ENCODE measurements at regions of chr10 and their contacts with region 1.

Region 1: DNA sequence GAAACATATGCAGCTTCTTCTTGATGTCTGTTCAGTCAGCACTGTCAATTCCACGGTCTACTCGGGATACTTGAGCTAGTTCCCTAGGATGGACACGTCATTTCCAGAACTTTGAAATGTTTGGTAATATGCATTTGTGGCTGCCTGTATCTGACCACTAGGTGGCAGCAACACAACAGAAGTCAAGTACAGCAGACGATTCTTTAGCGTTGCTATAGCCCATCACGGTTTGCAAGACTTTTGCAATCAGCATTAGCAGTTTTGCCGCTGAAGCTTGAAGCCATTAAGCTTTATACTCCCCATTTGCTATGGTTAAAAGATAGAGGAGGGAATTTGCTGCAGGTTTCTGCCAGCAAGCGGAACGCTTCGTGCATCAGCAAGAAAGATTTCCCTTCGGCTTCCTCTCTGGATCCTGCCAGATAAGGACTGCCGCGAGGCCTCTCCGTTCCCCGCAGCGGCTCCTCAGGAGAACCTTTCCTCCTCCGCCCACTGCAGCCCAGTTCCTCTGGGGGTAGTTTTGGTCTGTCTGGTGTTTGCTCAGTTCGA is 63.5 kb downstream of the ABCC2 start:
- DNase-seq: peak in 1 of 2 experiments; percentile 74
- H3K4me3 ChIP-seq: no peak overlapping the region
- H3K27ac ChIP-seq: no peak overlapping the region
- H3K4me1 ChIP-seq: peaks cover 8 to 31% (median 21%) of the 10 kb centered on the region in 4 experiments; a peak in 6 of 7 replicates
- H3K27me3 ChIP-seq: no peaks in the 10 kb centered on the region; a peak in 1 of 7 replicates
- CTCF ChIP-seq: peak; percentile 7 to 98 (median 83)
- EP300 ChIP-seq: no peak
- POLR2A ChIP-seq: no peak
- RAD21 ChIP-seq: peak; percentile 95 to 97

Region 2: DNA sequence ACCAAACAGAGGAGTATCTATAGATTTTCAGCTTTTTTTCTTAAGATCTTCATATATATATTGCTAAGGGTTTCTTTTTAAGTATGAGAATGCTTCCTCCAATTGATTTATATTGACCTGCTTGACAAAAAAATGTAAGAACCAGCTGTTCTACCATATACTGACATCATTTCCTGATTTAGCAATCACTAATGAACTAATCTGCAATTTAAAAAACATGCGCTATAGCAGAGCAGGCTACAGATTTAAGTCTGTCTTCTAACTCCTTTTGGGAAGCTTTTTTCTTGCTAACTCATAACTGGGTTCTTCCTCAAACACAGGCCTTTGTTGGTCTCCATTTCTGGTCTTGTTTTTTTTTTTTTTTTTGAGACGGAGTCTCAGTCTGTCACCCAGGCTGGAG is 30.3 kb before region 1 on chr10:
- CTCF ChIA-PET with region 1: no interaction called
- POLR2A ChIA-PET with region 1: no interaction called
- DNase-seq: no peak
- H3K4me3 ChIP-seq: no peak overlapping the region
- H3K27ac ChIP-seq: no peak overlapping the region
- H3K4me1 ChIP-seq: no peaks in the 10 kb centered on the region
- H3K27me3 ChIP-seq: peaks cover 0 to 1% (median 0%) of the 10 kb centered on the region in 4 experiments; a peak in 1 of 7 replicates
- CTCF ChIP-seq: no peak
- EP300 ChIP-seq: no peak
- POLR2A ChIP-seq: no peak
- RAD21 ChIP-seq: no peak

Region 3: GRCh38 chr10:99827936-99828335 is 18.0 kb before region 1 on chr10:
- CTCF ChIA-PET with region 1: interaction called, 11 read pairs
- POLR2A ChIA-PET with region 1: no interaction called
- DNase-seq: no peak
- H3K4me3 ChIP-seq: no peak overlapping the region
- H3K27ac ChIP-seq: no peak overlapping the region
- H3K4me1 ChIP-seq: no peaks in the 10 kb centered on the region
- H3K27me3 ChIP-seq: no peaks in the 10 kb centered on the region
- CTCF ChIP-seq: no peak
- EP300 ChIP-seq: no peak
- POLR2A ChIP-seq: no peak
- RAD21 ChIP-seq: no peak

Region 4: GRCh38 chr10:99834410-99834809 is 11.5 kb before region 1 on chr10:
- CTCF ChIA-PET with region 1: interaction called, 13 read pairs
- POLR2A ChIA-PET with region 1: no interaction called
- DNase-seq: no peak
- H3K4me3 ChIP-seq: no peak overlapping the region
- H3K27ac ChIP-seq: no peak overlapping the region
- H3K4me1 ChIP-seq: no peaks in the 10 kb centered on the region
- H3K27me3 ChIP-seq: no peaks in the 10 kb centered on the region
- CTCF ChIP-seq: no peak
- EP300 ChIP-seq: no peak
- POLR2A ChIP-seq: no peak
- RAD21 ChIP-seq: no peak

Region 5: DNA sequence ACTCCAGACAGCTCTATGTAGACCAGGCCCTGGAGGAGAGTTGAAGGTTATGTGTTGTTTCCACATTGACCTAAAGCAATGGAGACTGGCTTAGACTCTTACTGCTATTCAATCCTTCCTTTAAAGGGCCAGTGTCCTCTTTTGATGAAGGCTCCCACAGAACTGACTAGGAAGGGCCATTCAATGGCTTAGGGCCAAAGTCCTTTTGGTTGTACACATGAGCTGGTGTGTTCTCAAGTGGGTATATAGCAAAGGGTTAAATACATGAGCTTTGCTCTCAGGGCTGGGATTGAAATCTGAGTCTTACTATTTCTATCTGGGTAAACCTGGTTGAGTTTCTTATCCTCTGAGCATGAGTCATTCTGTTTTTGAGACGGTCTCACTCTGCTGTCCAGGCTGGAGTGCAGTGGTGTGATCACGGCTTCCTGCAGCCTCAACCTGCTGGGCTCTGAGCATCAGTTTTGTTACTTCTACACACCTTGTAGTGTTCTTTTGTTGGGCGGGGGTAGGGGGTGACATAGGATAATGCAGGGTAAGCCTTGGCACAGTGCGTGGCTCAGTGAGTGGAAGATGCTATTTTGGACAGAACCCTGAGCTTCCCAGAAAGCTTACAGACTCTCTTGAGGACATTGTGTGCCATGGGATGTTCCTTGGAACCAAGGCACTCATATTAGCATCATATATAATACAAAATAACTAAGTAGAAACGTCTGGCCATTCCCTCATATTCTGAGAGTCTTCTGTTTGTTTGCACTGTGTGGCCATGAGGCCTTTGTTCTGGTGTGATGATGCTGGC is 26.7 kb after region 1 on chr10:
- CTCF ChIA-PET with region 1: interaction called, 47 read pairs
- POLR2A ChIA-PET with region 1: interaction called, 7 read pairs
- DNase-seq: no peak
- H3K4me3 ChIP-seq: no peak overlapping the region
- H3K27ac ChIP-seq: no peak overlapping the region
- H3K4me1 ChIP-seq: no peaks in the 10 kb centered on the region
- H3K27me3 ChIP-seq: no peaks in the 10 kb centered on the region
- CTCF ChIP-seq: no peak
- EP300 ChIP-seq: no peak
- POLR2A ChIP-seq: no peak
- RAD21 ChIP-seq: no peak

Region 6: DNA sequence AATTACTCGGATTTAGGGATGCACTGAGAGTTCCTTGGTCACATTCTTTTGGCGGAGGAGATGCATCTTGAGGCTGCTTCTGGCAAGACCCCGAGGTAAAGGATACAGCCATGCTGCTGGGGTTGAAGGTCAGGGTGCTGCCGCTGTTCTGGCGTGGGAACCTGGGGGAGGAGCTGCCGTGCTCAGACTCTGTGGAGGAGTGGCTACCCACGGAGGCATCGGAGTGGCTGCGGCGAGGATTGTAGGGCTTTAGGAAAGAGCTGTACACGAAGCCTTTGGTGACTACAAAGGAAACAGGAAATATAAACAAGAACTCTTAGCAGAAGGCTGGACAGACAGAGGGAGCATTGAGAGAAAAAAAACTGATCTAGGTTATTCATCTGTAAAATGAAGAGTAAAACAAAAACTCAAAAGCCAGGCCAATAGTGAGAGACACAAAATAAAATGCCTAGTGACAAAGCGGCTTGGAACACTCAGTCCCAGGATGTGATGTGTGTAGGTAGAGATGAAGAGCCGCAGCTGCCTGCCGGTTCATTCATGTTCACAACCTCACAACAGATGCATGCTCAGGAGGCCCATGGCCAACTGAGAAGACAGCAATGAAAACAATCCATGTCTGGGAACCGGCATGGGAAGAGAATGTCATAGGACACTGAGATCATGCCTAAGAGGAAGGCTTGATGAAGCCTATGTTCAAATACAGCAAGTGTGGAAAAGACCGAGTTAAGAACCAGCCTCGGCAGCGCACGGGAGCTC is 34.3 kb after region 1 on chr10:
- CTCF ChIA-PET with region 1: interaction called, 47 read pairs
- POLR2A ChIA-PET with region 1: interaction called, 7 read pairs
- DNase-seq: no peak
- H3K4me3 ChIP-seq: no peak overlapping the region
- H3K27ac ChIP-seq: no peak overlapping the region
- H3K4me1 ChIP-seq: no peaks in the 10 kb centered on the region
- H3K27me3 ChIP-seq: no peaks in the 10 kb centered on the region
- CTCF ChIP-seq: no peak
- EP300 ChIP-seq: no peak
- POLR2A ChIP-seq: no peak
- RAD21 ChIP-seq: no peak

Region 7: GRCh38 chr10:99917963-99918825 is 72.3 kb after region 1 on chr10:
- CTCF ChIA-PET with region 1: interaction called, 11 read pairs
- POLR2A ChIA-PET with region 1: interaction called, 4 read pairs
- DNase-seq: peak; percentile 34 to 75
- H3K4me3 ChIP-seq: peak overlapping the region; percentile 45 to 67 (median 50)
- H3K27ac ChIP-seq: peak overlapping the region; percentile 94
- H3K4me1 ChIP-seq: peaks cover 4 to 12% (median 9%) of the 10 kb centered on the region in 4 experiments; a peak in 6 of 7 replicates
- H3K27me3 ChIP-seq: no peaks in the 10 kb centered on the region
- CTCF ChIP-seq: no peak
- EP300 ChIP-seq: peak in 1 of 2 experiments; percentile 56; a peak in 1 of 3 replicates
- POLR2A ChIP-seq: peak in 1 of 2 experiments; percentile 76; a peak in 1 of 3 replicates
- RAD21 ChIP-seq: 0 out of 4 replicates have a peak, but pooled peaks of 1 of the 2 experiments have one; percentile 13

Measured in H1 (cell line).